HEK293 (cell line): ENCODE measurements at regions of chr1 and their contacts with region 1.

Region 1: DNA sequence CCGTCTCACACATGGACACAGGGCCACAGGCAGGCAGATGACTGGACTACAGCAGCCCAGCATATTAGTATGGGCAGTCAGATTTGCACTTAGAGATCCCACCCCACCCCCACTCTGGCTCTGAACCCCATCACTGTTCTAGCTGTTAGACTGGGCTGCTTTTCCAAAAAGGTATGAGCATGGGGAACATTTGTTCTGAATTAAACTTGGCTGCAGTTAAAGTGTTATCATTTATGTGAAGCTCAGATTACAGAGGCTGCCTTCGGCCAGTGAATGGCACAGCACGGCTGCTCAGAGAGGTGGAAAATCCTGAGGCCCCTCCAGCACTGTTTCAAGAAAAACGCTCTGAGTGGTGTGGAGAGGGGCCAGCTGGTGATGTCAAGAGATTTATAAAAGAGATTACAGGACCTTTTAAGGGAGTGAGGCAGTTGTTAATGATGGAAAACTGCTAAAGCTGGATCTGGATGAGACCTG is 6.9 kb upstream of the NOS1AP start:
- H3K4me3 ChIP-seq: no peak overlapping the region
- H3K27ac ChIP-seq: peak overlapping the region; percentile 47
- H3K4me1 ChIP-seq: peaks cover 20% of the 10 kb centered on the region
- CTCF ChIP-seq: no peak

Region 2: DNA sequence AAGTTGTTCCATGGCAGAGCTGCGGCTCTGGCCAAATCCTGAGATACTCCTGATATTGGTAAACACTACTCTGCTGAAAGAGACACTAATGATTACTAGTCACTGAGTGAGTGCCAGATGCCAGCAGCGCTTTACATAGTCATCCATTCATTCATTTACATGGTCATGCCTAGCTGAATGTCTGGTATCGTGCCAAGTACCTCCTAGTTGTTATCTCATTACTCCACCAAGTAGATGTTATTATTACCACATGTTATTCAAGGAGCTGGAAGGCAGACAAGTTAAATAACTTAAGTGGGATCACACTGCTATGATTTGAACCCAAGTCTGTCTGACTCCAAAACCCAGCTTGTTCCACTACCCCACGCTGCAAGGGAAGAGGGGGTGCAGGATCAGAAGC is 43.6 kb before region 1 on chr1:
- CTCF ChIA-PET with region 1: no interaction called
- POLR2A ChIA-PET with region 1: no interaction called
- H3K4me3 ChIP-seq: no peak overlapping the region
- H3K27ac ChIP-seq: no peak overlapping the region
- H3K4me1 ChIP-seq: peaks cover 12% of the 10 kb centered on the region
- CTCF ChIP-seq: no peak

Region 3: GRCh38 chr1:162276493-162276892 is 213.9 kb after region 1 on chr1:
- CTCF ChIA-PET with region 1: interaction called, 23 read pairs
- POLR2A ChIA-PET with region 1: no interaction called
- H3K4me3 ChIP-seq: no peak overlapping the region
- H3K27ac ChIP-seq: no peak overlapping the region
- H3K4me1 ChIP-seq: no peaks in the 10 kb centered on the region
- CTCF ChIP-seq: peak; percentile 53